GM12878 (cell line): ENCODE measurements at regions of chr2 and their contacts with region 1.

Region 1: DNA sequence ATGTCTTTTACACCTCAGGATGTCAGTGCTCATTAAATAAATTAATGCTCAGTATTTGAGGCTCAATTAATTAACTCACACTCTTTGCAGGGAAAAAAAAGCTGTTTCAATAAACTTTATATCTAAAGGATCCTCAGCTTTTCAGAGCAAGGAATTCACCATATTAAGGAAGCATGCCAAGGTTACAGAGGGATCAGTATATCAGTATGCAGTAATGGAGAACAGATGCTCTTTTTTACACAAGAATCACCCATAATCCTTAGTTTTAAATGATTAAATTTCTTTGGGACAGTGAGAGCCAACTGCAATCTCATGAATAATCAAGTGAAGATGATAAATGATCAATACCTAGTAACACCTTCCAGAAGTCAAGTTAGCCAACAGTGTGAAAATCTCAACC is 14.9 kb upstream of the LCT start:
- DNase-seq: no peak
- ATAC-seq: no peak
- H3K4me3 ChIP-seq: no peak overlapping the region
- H3K27ac ChIP-seq: no peak overlapping the region
- H3K4me1 ChIP-seq: no peaks in the 10 kb centered on the region
- H3K27me3 ChIP-seq: no peaks in the 10 kb centered on the region
- CTCF ChIP-seq: no peak
- EP300 ChIP-seq: no peak
- POLR2A ChIP-seq: no peak
- RAD21 ChIP-seq: no peak

Region 2: GRCh38 chr2:135424839-135425238 is 427.0 kb before region 1 on chr2:
- CTCF ChIA-PET with region 1: no interaction called
- POLR2A ChIA-PET with region 1: interaction called, 11 read pairs
- RAD21 ChIA-PET with region 1: no interaction called
- SMC1A ChIA-PET with region 1: no interaction called
- in situ Hi-C with region 1: no loop called
- intact Hi-C with region 1: no loop called
- DNase-seq: no peak
- ATAC-seq: no peak
- H3K4me3 ChIP-seq: no peak overlapping the region
- H3K27ac ChIP-seq: no peak overlapping the region
- H3K4me1 ChIP-seq: no peaks in the 10 kb centered on the region
- H3K27me3 ChIP-seq: no peaks in the 10 kb centered on the region
- CTCF ChIP-seq: no peak
- EP300 ChIP-seq: no peak
- POLR2A ChIP-seq: no peak
- RAD21 ChIP-seq: no peak

Region 3: DNA sequence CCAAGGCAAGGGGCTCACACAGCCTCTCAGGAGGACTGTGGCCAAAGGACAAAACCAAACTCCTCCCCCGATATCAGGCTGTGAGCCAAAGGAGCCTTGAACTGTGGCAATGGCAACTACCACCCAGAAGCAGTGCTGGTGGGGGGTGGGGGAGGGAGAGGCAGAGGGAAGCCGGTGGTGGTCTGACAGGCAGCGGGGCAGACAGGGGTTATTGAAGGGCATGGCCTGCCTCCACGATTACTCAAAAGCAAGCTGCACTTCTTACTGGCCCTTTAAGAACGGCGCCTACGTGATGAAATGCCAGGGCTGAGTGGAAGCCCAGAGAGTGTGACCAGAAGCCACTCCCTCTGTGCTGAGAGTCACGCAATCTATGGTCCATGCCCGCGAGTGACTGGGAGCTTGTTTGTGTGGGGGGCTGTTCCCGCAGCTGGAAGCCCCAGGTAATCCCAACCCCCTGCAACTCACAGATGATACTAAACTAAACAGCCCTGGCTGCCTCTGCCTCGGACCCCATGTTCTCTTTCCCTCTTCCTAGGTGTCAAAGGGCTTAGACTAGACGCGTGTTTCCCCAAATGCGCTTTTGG is 394.3 kb after region 1 on chr2:
- CTCF ChIA-PET with region 1: no interaction called
- POLR2A ChIA-PET with region 1: no interaction called
- RAD21 ChIA-PET with region 1: no interaction called
- SMC1A ChIA-PET with region 1: no interaction called
- in situ Hi-C with region 1: no loop called
- intact Hi-C with region 1: no loop called
- DNase-seq: peak; percentile 60
- ATAC-seq: peak; percentile 96
- H3K4me3 ChIP-seq: no peak overlapping the region
- H3K27ac ChIP-seq: no peak overlapping the region; the same call in 1 of the 2 replicates
- H3K4me1 ChIP-seq: peaks cover 3% of the 10 kb centered on the region; the same call in 1 of the 2 replicates
- H3K27me3 ChIP-seq: 0 out of 4 replicates have a peak, but pooled peaks cover 0 to 2% of the 10 kb centered on the region in 2 experiments
- CTCF ChIP-seq: no peak
- EP300 ChIP-seq: peak; percentile 78 to 87; a peak in 3 of 4 replicates
- POLR2A ChIP-seq: no peak
- RAD21 ChIP-seq: no peak